Prostate gland (tissue), 2 donors: ENCODE measurements at regions of chr18 and their contacts with region 1.

Region 1: GRCh38 chr18:22314420-22314819 is 103.3 kb downstream of the CTAGE1 start:
- DNase-seq: no peak
- H3K4me3 ChIP-seq: no peak overlapping the region
- H3K27ac ChIP-seq: no peak overlapping the region
- H3K4me1 ChIP-seq: no peaks in the 10 kb centered on the region
- H3K27me3 ChIP-seq: no peaks in the 10 kb centered on the region
- CTCF ChIP-seq: no peak
- POLR2A ChIP-seq: no peak

Region 2: DNA sequence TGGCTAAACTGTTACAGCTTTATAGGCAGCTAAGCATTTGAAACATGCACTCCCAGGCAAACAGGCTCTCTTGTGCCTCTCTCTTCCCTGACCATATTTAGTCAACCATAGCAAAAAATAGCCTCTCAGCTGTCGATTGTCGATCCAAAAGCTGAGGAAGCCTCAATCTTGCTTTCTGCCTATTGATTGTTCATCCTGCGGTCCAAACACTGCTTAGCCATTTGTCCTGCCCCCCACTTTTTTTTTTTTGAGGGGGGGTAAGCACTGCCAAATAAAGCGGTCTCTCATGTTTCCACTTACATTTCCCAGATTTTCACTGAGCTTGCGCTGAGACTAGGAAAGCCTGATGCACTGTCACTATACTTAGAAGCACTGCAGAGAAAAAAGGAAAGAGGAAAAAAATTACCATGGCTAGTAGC is 483.0 kb before region 1 on chr18:
- intact Hi-C with region 1: no loop called
- DNase-seq: no peak
- H3K4me3 ChIP-seq: no peak overlapping the region
- H3K27ac ChIP-seq: no peak overlapping the region
- H3K4me1 ChIP-seq: no peaks in the 10 kb centered on the region
- H3K27me3 ChIP-seq: no peaks in the 10 kb centered on the region
- CTCF ChIP-seq: no peak
- POLR2A ChIP-seq: no peak

Region 3: GRCh38 chr18:22267697-22268096 is 46.7 kb before region 1 on chr18:
- intact Hi-C with region 1: loop called (anchors 10 kb)
- DNase-seq: no peak
- H3K4me3 ChIP-seq: no peak overlapping the region
- H3K27ac ChIP-seq: no peak overlapping the region
- H3K4me1 ChIP-seq: no peaks in the 10 kb centered on the region
- H3K27me3 ChIP-seq: no peaks in the 10 kb centered on the region
- CTCF ChIP-seq: no peak
- POLR2A ChIP-seq: no peak